BJ (cell line): ENCODE measurements at regions of chrX and their contacts with region 1.

Region 1: DNA sequence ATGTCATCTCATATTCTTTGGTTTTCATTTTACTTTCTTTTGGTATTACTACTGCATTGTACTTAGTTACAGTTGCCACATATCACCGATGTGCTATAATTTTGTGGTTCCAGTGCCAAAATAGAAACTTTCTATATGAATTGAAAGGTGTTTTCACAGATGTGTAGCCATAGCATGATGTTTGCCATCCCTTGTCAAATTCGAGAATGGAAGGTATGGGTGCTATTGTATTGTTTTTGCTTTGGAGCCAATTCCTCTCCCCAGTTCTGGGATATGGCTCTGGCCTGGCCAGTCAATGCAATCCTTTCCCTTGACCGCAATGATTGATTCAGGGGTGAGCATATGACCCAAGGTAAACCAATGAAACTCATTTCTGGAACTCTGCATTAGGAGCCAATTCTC is 86.2 kb upstream of the RPS6KA3 start:
- DNase-seq: no peak
- H3K4me3 ChIP-seq: no peak overlapping the region
- H3K27me3 ChIP-seq: no peaks in the 10 kb centered on the region
- CTCF ChIP-seq: no peak

Region 2: DNA sequence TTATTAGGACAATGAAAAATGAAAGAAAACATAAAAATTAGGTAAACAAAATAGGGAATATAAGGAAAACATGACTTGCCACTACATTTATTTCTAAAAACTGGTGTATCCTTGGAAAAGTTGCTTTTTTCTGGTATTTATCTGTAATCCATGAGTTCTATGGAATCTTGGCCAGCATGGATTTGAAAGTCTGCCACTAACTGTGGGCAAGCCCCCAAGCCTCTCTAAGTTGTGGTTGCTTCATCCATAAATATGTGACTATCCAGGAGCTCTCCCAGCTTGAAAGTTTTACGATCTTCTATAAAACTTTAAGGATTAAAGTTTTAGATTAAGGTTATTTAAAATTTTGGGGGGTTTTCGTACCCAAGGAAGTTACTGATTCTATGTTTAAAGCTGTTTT is 108.0 kb before region 1 on chrX:
- CTCF ChIA-PET with region 1: no interaction called
- POLR2A ChIA-PET with region 1: interaction called, 13 read pairs
- DNase-seq: no peak
- H3K4me3 ChIP-seq: no peak overlapping the region
- H3K27me3 ChIP-seq: no peaks in the 10 kb centered on the region
- CTCF ChIP-seq: no peak